SK-N-SH (cell line): ENCODE measurements at regions of chr2 and their contacts with region 1.

Region 1: GRCh38 chr2:70789304-70790135 is 923 bp downstream of the FIGLA start:
- DNase-seq: peak; percentile 81
- H3K4me3 ChIP-seq: peak overlapping the region; percentile 26 to 55
- H3K27ac ChIP-seq: no peak overlapping the region
- H3K4me1 ChIP-seq: peaks cover 0 to 9% of the 10 kb centered on the region in 2 experiments; a peak in 1 of 4 replicates
- H3K27me3 ChIP-seq: peaks cover 44% of the 10 kb centered on the region
- CTCF ChIP-seq: peak; percentile 69
- EP300 ChIP-seq: no peak
- RAD21 ChIP-seq: peak; percentile 83

Region 2: DNA sequence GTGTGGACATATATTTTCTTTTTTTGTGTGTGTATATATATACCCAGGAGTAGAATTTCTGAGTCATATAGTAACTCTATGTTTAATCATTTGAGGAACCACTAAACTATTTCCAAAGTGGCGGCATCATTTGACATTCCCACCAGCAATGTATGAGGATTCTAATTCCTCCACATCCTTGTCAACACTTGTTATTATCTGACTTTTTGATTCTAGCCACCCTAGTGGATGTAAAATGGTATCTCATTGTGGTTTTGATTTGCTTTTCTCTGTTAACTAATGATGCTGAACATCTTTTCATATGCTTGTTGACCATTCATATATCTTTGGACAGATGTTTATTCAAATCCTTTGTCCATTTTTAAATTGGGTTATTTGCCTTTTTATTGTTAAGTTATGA is 356.2 kb before region 1 on chr2:
- CTCF ChIA-PET with region 1: no interaction called
- POLR2A ChIA-PET with region 1: no interaction called
- DNase-seq: no peak
- H3K4me3 ChIP-seq: no peak overlapping the region
- H3K27ac ChIP-seq: no peak overlapping the region
- H3K4me1 ChIP-seq: no peaks in the 10 kb centered on the region
- H3K27me3 ChIP-seq: no peaks in the 10 kb centered on the region
- CTCF ChIP-seq: no peak
- EP300 ChIP-seq: no peak
- RAD21 ChIP-seq: no peak

Region 3: GRCh38 chr2:70656421-70657010 is 133.0 kb before region 1 on chr2:
- CTCF ChIA-PET with region 1: interaction called, 51 read pairs
- POLR2A ChIA-PET with region 1: no interaction called
- DNase-seq: no peak
- H3K4me3 ChIP-seq: no peak overlapping the region
- H3K27ac ChIP-seq: no peak overlapping the region
- H3K4me1 ChIP-seq: no peaks in the 10 kb centered on the region
- H3K27me3 ChIP-seq: peaks cover 16% of the 10 kb centered on the region; the same call in 1 of the 2 replicates
- CTCF ChIP-seq: no peak
- EP300 ChIP-seq: no peak
- RAD21 ChIP-seq: no peak

Region 4: DNA sequence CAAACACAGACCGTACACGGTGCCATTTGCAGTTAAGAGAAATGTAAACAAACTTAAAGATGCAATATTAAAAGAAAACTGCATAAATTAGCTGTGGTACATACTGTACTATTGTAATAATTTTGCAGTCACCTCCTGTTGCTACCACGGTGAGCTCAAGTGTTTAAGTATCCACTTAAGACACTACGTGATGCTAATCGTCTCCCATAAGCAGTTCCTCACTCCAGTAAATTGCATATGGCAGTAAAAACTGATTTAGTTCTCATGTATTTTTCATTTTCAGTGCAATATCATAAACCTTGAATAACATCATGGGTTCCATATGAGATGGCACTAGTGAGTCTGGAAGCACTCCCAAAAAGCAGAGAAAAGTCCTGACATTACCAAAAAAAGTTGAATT is 16.5 kb after region 1 on chr2:
- CTCF ChIA-PET with region 1: interaction called, 19 read pairs
- POLR2A ChIA-PET with region 1: no interaction called
- DNase-seq: no peak
- H3K4me3 ChIP-seq: no peak overlapping the region
- H3K27ac ChIP-seq: no peak overlapping the region
- H3K4me1 ChIP-seq: no peaks in the 10 kb centered on the region
- H3K27me3 ChIP-seq: no peaks in the 10 kb centered on the region; the same call in 1 of the 2 replicates
- CTCF ChIP-seq: no peak
- EP300 ChIP-seq: no peak
- RAD21 ChIP-seq: no peak

Region 5: DNA sequence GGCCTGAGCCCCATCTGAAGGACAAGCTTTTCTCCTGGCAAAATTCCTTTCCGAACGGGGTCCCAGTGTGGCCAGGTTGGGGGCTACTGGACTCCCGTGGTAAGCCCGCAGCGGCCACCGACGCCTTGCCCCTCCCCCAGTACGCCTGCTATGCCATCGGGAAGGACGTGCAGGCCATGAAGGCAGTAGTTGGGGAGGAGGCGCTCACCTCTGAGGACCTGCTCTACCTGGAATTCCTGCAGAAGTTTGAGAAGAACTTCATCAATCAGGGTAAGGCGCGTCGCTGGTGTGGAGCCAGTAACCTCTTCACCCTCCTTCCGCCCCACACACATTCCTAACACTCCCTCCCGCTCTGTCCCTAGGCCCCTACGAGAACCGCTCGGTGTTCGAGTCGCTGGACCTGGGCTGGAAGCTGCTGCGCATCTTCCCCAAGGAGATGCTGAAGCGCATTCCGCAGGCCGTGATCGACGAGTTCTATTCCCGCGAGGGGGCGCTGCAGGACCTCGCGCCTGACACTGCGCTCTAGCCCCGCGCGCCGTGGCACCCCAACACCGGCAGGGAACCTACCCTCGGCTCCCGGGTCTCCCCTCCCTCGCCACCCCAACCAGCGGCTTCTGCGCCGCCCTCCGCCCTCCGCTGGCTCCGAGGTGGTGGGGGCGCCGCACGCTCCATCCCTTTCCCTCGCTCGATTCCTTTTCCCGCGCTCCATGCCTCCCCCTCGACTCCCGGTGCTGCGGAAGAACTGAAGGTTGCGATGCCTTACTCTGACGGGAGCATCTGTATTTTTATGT is 175.3 kb after region 1 on chr2:
- CTCF ChIA-PET with region 1: interaction called, 15 read pairs
- POLR2A ChIA-PET with region 1: no interaction called
- DNase-seq: peak; percentile 84
- H3K4me3 ChIP-seq: peak overlapping the region; percentile 39 to 58
- H3K27ac ChIP-seq: no peak overlapping the region
- H3K4me1 ChIP-seq: no peaks in the 10 kb centered on the region; a peak in 1 of 4 replicates
- H3K27me3 ChIP-seq: no peaks in the 10 kb centered on the region
- CTCF ChIP-seq: peak; percentile 64
- EP300 ChIP-seq: no peak
- RAD21 ChIP-seq: peak; percentile 62